Activated naive CD4-positive, alpha-beta T cell treated with anti-CD3 and anti-CD28 coated beads, Interleukin-2, amount 10 ng/mL, durations not matched to agents 7 days and 5 days (primary cell): ENCODE measurements at regions of chr3 and their contacts with region 1.

Region 1: DNA sequence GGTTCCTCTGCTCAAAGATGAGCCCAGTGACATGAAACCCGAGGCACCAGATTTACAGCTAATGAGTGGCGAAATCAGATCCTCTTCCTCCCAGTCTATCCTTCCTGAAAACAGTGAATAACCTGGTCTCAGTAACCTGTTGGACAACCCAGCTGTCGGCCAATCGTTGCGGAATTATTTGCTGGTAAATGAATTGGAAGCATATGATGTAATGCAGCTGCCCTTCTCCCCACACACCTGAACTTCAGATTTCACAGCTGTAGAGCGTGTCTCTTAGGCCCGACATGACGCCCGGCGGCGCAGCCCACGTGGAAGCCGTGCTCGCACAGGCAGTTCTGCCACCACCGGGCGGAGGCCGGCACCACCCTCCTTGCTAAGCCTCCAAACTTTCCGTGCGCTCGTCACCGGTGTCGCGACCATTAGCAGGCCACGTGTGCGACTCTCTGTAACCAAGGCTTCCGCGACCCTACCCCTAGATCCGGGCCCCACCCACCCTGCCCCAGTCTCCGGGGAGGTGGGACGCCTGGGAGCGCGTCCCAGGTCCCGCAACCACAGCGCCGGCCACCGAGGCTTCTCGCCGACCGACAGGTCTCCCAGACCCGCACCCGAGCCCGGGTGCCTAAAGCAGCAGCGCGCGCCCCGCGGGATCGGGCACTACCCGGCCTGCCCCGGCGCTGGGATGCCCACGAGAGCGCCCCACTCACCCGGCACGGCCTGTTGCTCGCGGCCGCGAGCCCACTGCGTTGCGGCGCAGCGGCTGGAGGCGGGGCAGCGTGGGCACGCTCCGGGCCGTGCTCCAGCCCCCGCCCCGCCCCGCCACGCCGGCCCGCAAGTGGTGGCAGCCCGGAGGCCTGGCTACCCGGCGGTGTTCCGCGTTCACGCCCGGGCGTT is at the start of gene RIOX2:
- DNase-seq: peak; percentile 87
- H3K4me3 Mint-ChIP-seq: peak within 1 kb of the TSS; percentile 80
- H3K27ac Mint-ChIP-seq: peak within 1 kb of the TSS; percentile 96
- H3K4me1 Mint-ChIP-seq: peaks cover 77% of the 10 kb centered on the region
- H3K27me3 Mint-ChIP-seq: peaks cover 4% of the 10 kb centered on the region

Region 2: DNA sequence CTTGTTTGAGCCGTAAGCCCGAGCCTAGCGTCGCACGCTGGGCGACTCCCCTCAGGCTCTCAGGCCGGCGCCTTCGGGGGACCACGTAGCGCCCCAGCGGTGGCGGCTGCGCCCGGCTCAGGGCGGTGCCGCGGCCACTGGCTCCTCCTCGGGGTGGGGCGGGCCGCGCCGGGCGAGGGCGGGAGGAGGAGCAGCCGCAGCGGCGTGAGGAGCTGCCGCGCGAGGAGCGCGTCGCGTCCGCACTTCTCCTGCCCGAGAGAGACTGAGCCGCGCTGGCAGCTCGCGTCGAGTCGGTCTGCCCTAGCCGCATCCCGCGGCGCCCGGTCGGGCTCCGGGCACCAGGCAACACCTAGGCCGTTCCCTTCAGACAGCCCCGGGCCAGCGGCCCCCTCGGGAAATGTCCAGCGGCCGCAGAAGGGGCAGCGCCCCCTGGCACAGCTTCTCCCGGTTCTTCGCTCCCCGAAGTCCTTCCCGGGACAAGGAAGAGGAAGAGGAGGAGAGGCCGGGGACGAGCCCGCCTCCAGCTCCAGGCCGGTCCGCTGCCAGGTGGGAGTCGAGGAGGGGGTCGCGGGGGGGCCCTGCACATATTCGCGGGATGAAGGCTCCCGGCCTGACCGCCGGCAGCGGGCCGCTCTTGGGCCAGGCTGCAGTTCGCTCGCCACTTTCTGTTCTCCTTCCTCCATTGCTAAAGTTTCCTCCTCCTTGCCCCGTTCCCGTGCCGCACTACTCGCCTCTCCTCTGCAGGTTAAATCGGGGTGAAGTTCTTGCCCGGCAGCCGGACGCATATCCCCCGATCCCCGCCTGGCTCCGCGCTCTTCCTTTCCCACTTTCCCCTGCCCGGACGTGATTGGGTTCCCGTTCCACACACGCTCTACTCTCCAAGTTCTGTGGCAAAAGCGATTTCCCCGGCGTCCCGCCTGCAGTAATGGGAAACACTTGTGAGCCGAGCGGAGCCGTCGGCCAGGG is 149.8 kb before region 1 on chr3 and contains the start of gene CRYBG3:
- CTCF ChIA-PET with region 1: interaction called, 11 read pairs
- DNase-seq: peak; percentile 88
- H3K4me3 Mint-ChIP-seq: peak within 1 kb of the TSS; percentile 99
- H3K27ac Mint-ChIP-seq: peak within 1 kb of the TSS; percentile 85
- H3K4me1 Mint-ChIP-seq: peaks cover 27% of the 10 kb centered on the region
- H3K27me3 Mint-ChIP-seq: peaks cover 40% of the 10 kb centered on the region

Region 3: GRCh38 chr3:97952280-97952679 is 19.6 kb before region 1 on chr3:
- CTCF ChIA-PET with region 1: interaction called, 11 read pairs
- DNase-seq: no peak
- H3K4me3 Mint-ChIP-seq: no peak overlapping the region
- H3K27ac Mint-ChIP-seq: peak overlapping the region; percentile 20
- H3K4me1 Mint-ChIP-seq: peaks cover 5% of the 10 kb centered on the region
- H3K27me3 Mint-ChIP-seq: no peaks in the 10 kb centered on the region